ENCODE measurements at regions of chr3 and their contacts with region 1.

Region 1: DNA sequence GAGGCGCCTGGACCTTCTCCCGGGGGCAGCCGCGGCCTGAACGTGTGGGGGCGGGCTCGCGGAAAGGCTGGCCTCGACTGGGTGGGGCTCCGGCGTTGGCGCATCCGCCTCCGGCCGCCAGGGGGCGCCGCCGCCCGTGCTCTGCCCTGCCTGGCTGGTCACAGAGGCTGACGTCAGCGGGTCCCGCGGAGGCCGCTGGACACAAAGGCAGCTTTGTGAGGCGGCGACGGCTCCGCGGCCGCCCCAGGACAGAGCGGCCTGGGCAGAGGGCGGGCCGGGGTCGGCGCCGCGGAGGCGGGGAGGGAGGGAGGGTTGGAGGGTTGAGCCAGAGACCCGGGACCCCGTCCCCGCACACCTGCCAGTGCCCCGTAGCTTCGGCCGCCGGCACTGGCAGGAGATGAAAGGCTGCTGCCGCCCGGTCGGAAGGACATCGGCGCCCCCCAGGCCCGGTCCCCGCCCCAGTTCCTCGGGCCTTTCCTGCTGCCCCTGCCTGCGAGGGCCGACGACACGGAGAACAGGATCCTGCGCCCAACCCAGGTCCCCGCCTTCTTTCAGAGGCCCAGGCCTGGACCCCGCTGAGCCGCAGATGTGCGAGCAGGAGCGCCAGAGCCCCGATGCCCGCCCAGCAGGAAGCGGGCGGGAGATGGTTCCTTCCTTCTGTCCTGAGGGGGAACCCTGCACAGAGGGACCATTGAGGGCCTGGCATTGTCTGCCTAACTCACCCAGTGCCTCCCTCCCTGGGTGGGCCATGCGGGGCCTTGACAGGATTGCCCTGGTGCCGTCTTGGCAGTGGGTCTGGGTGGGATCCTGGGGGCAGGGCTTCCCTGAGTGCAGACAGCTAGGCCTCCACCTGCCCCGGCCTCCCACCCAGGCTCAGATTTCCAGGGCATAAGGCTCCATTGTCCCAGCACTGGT is 8.7 kb upstream of the SEMA3B start:
- DNase-seq: peak; percentile 72 to 96
- H3K4me3 ChIP-seq: peak overlapping the region; percentile 55 to 70
- H3K27ac ChIP-seq: peak overlapping the region; percentile 97 to 99
- H3K4me1 ChIP-seq: peaks cover 19 to 36% of the 10 kb centered on the region in 2 donors
- H3K27me3 ChIP-seq: no peaks in the 10 kb centered on the region
- CTCF ChIP-seq: peak; percentile 96 to 100 (median 99)

Region 2: GRCh38 chr3:50235716-50236496 is 24.4 kb before region 1 on chr3 and contains the start of gene GNAI2:
- intact Hi-C with region 1: loop called (anchors 2 kb)
- DNase-seq: peak; percentile 98 to 99
- H3K4me3 ChIP-seq: peak within 1 kb of the TSS; percentile 96 to 97
- H3K27ac ChIP-seq: peak within 1 kb of the TSS; percentile 92 to 95
- H3K4me1 ChIP-seq: peaks cover 22 to 23% of the 10 kb centered on the region in 2 donors
- H3K27me3 ChIP-seq: no peaks in the 10 kb centered on the region
- CTCF ChIP-seq: peak in 1 of 3 experiments; percentile 32
- total RNA-seq, gene GNAI2: 283 TPM

Region 3: DNA sequence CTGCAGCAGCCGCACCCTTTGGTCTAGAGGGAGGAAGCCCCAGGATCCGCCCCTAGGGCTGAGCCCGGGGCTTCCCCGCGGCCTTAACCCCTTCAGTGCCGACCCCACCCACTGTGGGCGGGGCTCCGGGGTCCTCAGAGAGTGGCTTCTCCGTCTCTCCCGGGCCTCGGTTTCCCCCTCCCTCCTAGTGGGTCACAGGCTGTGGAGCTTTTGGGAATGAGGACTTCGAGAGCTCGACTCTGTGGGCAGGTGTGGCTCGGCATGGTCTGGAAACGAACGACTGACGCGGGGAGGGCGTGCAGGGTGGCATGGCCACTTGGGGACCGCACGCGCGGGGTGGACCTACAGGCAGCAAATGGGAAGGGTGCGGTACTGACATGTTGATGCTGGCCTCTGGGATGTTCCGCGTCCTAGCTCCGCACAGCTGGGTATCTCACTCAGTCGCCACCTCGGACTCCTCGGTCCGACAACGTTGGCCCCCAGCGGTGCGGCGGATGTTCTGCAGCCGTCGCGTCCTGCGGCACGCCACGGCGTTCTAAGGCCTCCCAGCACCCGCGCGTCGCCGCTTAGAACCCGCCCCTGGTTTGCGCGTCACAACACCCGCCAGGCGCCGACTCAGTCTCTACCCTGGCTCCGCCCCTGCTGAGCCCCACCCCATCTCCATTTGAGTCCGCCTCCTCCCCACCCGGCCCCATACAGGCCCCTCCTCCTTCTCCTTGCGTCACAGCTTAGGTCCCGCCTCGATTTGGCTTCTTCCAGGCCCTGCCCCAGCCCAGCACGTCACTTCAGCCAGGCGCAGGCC is 38.8 kb after region 1 on chr3 and contains the starts of genes HYAL3 and NAA80:
- intact Hi-C with region 1: loop called (anchors 2 kb)
- DNase-seq: peak; percentile 96 to 100
- H3K4me3 ChIP-seq: peak within 1 kb of the TSS; percentile 85 to 89
- H3K27ac ChIP-seq: peak within 1 kb of the TSS; percentile 90 to 91
- H3K4me1 ChIP-seq: peaks cover 13 to 19% of the 10 kb centered on the region in 2 donors
- H3K27me3 ChIP-seq: no peaks in the 10 kb centered on the region
- CTCF ChIP-seq: peak; percentile 30 to 58 (median 39)
- total RNA-seq, gene HYAL3: not detected
- total RNA-seq, gene NAA80: 38.8 TPM

Region 4: DNA sequence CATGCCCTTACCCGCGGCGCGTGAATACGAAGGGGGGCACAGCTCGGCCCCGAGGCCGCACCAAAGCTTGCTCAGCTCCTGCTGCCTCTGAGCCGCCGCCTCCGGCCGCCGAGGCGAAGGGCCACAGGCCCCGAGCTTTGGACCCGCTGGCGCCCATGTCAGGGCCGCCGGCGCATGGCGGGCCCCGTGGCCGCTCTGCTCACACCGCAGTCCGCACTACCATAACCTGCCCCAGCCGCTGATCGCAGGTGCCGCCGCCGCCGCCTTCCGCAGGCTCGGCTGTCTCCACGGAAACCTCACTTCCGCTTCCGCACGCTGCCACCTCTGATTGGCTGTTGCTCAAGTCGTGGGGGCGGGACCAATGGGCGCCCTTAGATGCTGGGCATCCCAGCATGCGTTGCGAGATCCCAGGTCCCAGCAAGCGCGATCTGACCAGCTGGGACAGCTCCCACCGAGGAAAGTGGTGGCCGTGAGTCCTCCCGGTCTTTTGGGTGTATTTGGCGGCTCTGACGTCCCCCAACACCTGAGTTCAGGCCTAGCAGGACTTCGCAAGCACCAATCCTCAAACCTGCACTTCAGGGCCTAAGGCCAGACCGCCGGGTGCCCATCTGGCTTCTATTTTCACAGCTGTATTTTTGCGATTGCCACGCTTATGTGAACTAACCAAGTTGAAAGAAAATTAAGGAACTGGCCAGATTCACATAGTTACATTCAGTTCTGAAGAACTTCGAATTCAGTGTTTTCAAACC is 67.8 kb after region 1 on chr3 and contains the start of gene TUSC2:
- intact Hi-C with region 1: loop called (anchors 2 kb)
- DNase-seq: peak; percentile 90 to 99
- H3K4me3 ChIP-seq: peak within 1 kb of the TSS; percentile 81 to 95
- H3K27ac ChIP-seq: peak within 1 kb of the TSS; percentile 84 to 89
- H3K4me1 ChIP-seq: peaks cover 5 to 16% of the 10 kb centered on the region in 2 donors
- H3K27me3 ChIP-seq: no peaks in the 10 kb centered on the region
- CTCF ChIP-seq: no peak
- total RNA-seq, gene TUSC2: 25.4 TPM

Region 5: GRCh38 chr3:50340448-50341329 is 80.4 kb after region 1 on chr3 and contains the start of gene RASSF1:
- intact Hi-C with region 1: no loop called
- DNase-seq: peak; percentile 58 to 86
- H3K4me3 ChIP-seq: peak within 1 kb of the TSS; percentile 68 to 96
- H3K27ac ChIP-seq: peak within 1 kb of the TSS; percentile 99
- H3K4me1 ChIP-seq: peaks cover 20 to 52% of the 10 kb centered on the region in 2 donors
- H3K27me3 ChIP-seq: no peaks in the 10 kb centered on the region
- CTCF ChIP-seq: no peak
- total RNA-seq, gene RASSF1: 34.9 TPM

Measured in ascending aorta (tissue), 2 donors.